ENCODE measurements at regions of chr7 and their contacts with region 1.

Region 1: GRCh38 chr7:139359366-139360209 is at the start of gene LUC7L2:
- DNase-seq: peak; percentile 100
- H3K4me3 ChIP-seq: peak within 1 kb of the TSS; percentile 75 to 98
- H3K27ac ChIP-seq: peak within 1 kb of the TSS; percentile 99 to 100
- H3K4me1 ChIP-seq: no peaks in the 10 kb centered on the region
- H3K27me3 ChIP-seq: no peaks in the 10 kb centered on the region
- CTCF ChIP-seq: peak in 2 of 4 experiments; percentile 17 to 44
- POLR2A ChIP-seq: peak; percentile 94
- total RNA-seq, gene LUC7L2: 71.2 to 81.7 TPM

Region 2: GRCh38 chr7:139230774-139231512 is 128.6 kb before region 1 on chr7 and contains the start of gene UBN2:
- intact Hi-C with region 1: loop called (anchors 10 kb)
- DNase-seq: peak; percentile 94
- H3K4me3 ChIP-seq: peak within 1 kb of the TSS; percentile 98 to 100
- H3K27ac ChIP-seq: peak within 1 kb of the TSS; percentile 96 to 98
- H3K4me1 ChIP-seq: no peaks in the 10 kb centered on the region
- H3K27me3 ChIP-seq: no peaks in the 10 kb centered on the region
- CTCF ChIP-seq: peak in 1 of 4 experiments; percentile 11
- POLR2A ChIP-seq: peak; percentile 90
- total RNA-seq, gene UBN2: 13.9 to 25.2 TPM

Region 3: DNA sequence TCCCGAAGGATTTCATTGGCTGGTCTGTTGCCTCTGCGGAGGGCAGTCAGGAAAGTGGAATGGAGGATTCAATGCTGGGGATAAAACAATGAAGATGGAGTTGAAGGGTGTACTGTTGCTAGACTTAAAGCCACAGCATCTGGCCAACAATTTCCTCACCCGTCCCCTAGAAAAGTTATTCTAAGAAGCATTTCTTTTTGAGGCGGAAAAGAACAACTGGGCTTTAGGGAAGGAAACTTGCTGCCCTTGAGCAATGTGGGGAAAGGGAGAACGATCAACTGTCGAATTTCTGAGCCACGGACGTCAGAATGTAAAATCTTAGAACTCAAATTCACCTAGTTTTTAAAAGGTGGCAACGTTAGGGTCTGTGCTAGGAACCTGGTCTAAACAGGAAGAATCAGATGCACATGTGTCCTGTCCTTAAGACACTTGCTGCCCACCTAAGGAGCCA is 17.8 kb before region 1 on chr7:
- intact Hi-C with region 1: loop called (anchors 1 kb)
- DNase-seq: no peak
- H3K4me3 ChIP-seq: peak overlapping the region; percentile 59 to 61
- H3K27ac ChIP-seq: peak overlapping the region; percentile 98 to 99
- H3K4me1 ChIP-seq: peaks cover 4% of the 10 kb centered on the region
- H3K27me3 ChIP-seq: no peaks in the 10 kb centered on the region
- CTCF ChIP-seq: no peak
- POLR2A ChIP-seq: no peak

Region 4: DNA sequence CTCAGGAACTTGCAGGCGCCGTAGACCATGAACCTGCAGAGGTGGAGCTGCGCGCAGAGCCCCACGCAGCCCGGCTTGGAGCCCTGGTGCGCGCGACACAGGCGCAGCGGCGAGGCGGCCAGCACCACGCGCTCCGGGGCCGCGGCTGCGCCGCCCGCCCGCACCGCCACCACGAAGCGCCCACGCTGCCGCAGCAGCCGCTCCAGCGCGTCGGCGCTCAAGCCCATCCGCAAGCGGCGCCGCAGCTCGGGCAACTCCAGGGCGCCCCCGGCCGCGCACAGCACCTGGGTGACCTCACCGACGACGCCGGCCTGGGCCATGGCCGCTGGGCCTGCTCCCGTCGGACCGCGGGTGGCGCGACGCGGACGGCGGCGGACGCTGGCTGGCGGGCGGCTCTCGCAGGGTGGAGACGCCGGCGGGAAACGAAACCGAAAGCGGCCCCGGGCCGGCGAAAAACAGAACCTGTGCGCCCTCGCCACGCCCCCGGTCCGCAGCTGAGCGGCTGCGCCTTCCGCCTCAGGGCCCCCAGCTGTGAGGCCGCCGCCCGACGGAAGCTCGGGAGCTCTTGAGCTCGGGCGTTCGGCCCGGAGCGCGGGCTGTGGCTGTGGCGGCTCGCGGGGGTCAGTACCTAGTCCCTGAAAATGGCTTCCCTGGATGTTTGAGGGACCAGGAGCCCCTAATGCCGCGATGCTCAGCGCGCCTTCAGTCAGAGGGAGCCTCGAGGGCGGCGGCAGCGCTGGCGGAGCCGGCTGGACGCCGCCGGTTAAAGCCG is 703.1 kb after region 1 on chr7 and contains the start of gene PARP12:
- intact Hi-C with region 1: loop called (anchors 10 kb)
- DNase-seq: peak; percentile 82
- H3K4me3 ChIP-seq: peak within 1 kb of the TSS; percentile 74 to 75
- H3K27ac ChIP-seq: peak within 1 kb of the TSS; percentile 91 to 93
- H3K4me1 ChIP-seq: peaks cover 7% of the 10 kb centered on the region
- H3K27me3 ChIP-seq: no peaks in the 10 kb centered on the region
- CTCF ChIP-seq: peak in 1 of 4 experiments; percentile 12
- POLR2A ChIP-seq: peak; percentile 54
- total RNA-seq, gene PARP12: 21.9 to 46.4 TPM

Measured in prostate gland (tissue), 2 donors.